OCI-LY7 (cell line): ENCODE measurements at regions of chr7 and their contacts with region 1.

Region 1: DNA sequence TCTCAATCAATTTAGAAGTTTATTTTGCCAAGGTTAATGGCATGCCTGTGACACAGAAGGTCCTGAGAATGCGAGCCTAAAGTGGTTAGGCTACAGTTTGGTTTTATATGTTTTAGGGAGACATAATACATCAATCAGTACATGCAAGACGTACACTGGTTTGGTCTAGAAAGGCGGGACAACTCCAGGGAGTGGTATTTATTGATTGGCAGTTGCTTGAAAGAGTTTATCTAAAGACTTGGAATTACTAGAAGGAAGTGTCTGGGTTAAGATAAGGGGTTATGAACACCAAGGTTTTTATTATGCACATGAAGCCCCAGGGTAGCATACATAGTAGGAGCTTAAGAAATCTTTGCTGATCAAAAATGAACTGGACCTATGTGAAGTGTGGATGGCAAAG is 21.5 kb downstream of the NPVF start:
- DNase-seq: no peak
- H3K4me3 ChIP-seq: no peak overlapping the region
- H3K27ac ChIP-seq: no peak overlapping the region
- H3K4me1 ChIP-seq: peaks cover 18% of the 10 kb centered on the region
- CTCF ChIP-seq: no peak

Region 2: GRCh38 chr7:25179771-25180591 is 26.8 kb before region 1 on chr7:
- CTCF ChIA-PET with region 1: no interaction called
- POLR2A ChIA-PET with region 1: no interaction called
- intact Hi-C with region 1: loop called (anchors 1 kb)
- DNase-seq: peak; percentile 97
- H3K4me3 ChIP-seq: peak overlapping the region; percentile 78
- H3K27ac ChIP-seq: peak overlapping the region; percentile 57
- H3K4me1 ChIP-seq: peaks cover 9% of the 10 kb centered on the region
- CTCF ChIP-seq: peak; percentile 78